ENCODE measurements at regions of chr12 and their contacts with region 1.

Region 1: DNA sequence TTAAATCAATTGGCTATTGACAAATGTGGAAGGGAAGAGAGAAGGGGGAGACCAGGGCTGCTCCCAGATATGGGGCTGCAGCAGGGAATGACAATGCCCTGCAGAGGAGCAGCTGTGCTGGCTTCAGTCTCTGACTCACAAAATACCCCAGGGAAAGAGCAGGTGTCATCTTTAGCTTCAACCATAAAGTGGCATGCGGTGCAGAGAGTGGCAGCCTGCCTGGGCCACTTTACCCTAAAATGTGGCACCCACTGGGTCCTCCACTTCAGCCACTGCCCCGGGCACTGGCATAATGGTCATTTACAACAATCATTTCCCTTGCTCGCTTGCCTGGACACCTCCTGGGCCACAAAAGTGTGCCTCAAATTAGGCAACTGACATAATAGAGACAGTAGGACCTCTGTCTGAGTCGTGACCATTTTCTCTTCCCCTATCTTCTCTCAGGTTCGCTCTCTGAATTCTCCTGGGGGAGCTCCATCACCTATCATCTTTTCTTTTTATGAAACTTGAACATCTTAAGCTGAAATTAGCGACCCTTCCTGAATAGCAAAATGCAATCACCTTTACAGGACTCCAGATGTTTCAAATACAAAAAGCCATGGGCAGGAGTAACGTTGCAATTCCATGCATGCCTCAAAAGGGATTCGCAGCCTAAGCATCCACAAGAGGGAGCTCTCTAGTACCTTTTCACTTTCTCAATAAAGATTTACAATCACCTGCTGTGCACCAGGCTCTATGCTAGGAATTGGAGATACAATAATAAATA is 179.9 kb upstream of the ATF7IP start:
- DNase-seq: peak; percentile 27
- H3K4me3 Mint-ChIP-seq: no peak overlapping the region
- H3K27ac Mint-ChIP-seq: no peak overlapping the region
- H3K4me1 Mint-ChIP-seq: no peaks in the 10 kb centered on the region
- H3K27me3 Mint-ChIP-seq: peaks cover 6% of the 10 kb centered on the region

Region 2: GRCh38 chr12:13436696-13437391 is 748.8 kb before region 1 on chr12:
- CTCF ChIA-PET with region 1: no interaction called
- DNase-seq: no peak
- H3K4me3 Mint-ChIP-seq: no peak overlapping the region
- H3K27ac Mint-ChIP-seq: no peak overlapping the region
- H3K4me1 Mint-ChIP-seq: no peaks in the 10 kb centered on the region
- H3K27me3 Mint-ChIP-seq: peaks cover 6% of the 10 kb centered on the region

Region 3: DNA sequence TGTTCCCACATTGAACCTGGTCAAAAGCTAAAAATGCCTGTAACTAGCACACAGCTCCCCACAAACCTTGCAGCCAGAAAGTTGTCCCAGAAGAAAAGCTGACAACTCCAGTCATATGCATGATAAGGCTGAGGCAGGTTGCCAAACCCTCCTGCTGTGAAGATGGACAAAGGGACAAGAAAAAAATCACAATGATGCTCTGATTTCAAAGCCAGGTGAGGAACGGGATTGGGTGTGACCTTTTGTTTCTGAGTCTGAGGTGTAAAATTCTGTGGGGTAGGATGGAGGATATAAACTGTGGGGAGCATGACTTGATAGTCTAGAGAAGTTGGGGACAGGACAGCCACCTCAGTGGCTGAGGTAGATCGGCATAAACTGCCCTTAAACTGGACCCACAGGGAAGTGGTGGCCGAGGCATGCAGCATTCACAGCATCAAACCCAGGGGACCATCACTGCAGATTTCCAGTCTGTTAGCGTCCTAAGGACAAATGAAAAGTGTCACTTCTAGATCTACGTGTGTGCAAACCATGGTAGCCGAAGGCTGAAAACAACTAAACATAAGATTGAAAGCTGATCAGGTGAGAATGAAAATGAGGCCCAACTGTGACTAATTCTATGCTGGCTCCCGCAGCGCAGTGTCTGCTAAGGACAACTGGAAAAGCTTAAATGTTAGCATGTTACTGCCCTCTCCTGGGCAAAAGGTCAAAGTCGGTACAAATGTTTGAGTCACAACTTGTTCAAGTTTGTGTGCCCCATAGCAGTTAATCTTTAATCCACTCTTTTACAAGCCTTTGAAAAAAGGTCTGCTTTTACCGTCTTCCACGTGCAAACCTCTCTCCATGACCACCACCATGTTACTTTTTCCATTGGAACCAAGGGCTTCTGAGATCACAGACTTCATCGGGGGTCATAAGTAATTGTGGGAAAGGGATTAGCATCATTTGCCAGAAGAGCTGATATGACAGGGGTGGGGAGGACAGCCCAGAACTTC is 244.1 kb before region 1 on chr12:
- CTCF ChIA-PET with region 1: no interaction called
- DNase-seq: no peak
- H3K4me3 Mint-ChIP-seq: no peak overlapping the region
- H3K27ac Mint-ChIP-seq: no peak overlapping the region
- H3K4me1 Mint-ChIP-seq: no peaks in the 10 kb centered on the region
- H3K27me3 Mint-ChIP-seq: peaks cover 3% of the 10 kb centered on the region

Region 4: DNA sequence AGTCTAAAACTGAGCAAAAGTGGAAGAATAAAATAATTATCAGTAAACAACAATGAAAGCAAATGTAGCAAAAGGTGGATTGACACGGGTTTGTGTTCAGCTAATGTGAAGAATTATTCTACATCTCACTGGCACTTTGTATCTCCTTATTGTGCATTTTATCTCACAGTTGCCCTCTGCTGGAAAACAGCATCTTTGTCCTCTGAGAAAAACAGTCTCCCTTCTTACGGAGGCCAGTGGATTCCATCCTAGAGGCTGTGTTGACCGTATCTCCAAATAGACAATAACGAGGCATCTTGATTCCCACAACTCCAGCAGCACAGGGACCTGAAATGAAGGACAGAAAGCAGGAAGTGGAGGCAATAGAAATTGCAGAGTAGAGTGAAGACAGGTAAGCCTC is 433.4 kb after region 1 on chr12:
- CTCF ChIA-PET with region 1: interaction called, 16 read pairs
- DNase-seq: no peak
- H3K4me3 Mint-ChIP-seq: no peak overlapping the region
- H3K27ac Mint-ChIP-seq: no peak overlapping the region
- H3K4me1 Mint-ChIP-seq: no peaks in the 10 kb centered on the region
- H3K27me3 Mint-ChIP-seq: peaks cover 5% of the 10 kb centered on the region

Measured in activated naive CD4-positive, alpha-beta T cell treated with anti-CD3 and anti-CD28 coated beads, Interleukin-2, amount 10 ng/mL, durations not matched to agents 7 days and 5 days (primary cell).